ENCODE measurements at regions of chr9 and their contacts with region 1.

Region 1: DNA sequence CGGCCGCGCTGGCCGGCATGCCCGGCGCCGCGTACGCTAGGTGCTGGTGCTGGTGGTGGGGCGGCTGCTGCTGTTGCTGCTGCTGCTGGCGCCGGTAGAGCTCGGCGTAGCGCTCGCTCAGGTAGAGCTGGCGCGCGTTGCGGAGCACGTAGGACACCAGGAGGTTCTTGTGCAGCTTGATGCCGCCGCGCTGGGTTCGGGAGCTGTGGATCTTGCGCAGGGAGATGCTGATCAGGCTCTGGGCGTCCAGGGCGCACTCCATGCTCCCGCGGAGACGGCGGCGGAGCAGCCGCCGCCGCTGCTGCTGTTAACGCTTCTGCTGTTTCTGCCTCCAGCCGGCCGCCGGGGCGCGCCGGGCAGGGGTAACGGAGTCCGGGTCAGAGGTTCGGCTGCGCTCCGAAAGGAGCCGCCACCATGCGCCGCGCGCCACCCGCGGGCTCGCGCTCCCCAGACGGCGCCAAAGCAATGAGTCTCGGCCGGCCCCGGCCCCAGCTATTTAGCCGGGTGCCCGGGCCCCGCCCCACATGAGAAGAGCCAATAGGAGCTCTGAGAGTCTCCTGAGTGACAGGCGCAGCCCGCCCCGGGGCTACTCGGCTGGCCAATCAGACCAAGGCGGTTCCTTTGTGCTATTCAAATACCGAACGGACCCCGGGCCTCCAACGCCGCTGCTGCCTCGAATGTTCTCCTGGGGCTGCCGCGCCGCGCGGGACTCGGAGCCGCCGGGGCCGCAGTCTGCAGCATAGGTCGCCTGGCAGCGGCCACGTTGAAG is at the start of gene IER5L:
- DNase-seq: peak; percentile 93
- H3K4me3 Mint-ChIP-seq: peak within 1 kb of the TSS; percentile 91
- H3K27ac Mint-ChIP-seq: peak within 1 kb of the TSS; percentile 61
- H3K4me1 Mint-ChIP-seq: peaks cover 16% of the 10 kb centered on the region
- H3K27me3 Mint-ChIP-seq: peaks cover 7% of the 10 kb centered on the region
- total RNA-seq, gene IER5L: 14.4 TPM in 2 replicates

Region 2: DNA sequence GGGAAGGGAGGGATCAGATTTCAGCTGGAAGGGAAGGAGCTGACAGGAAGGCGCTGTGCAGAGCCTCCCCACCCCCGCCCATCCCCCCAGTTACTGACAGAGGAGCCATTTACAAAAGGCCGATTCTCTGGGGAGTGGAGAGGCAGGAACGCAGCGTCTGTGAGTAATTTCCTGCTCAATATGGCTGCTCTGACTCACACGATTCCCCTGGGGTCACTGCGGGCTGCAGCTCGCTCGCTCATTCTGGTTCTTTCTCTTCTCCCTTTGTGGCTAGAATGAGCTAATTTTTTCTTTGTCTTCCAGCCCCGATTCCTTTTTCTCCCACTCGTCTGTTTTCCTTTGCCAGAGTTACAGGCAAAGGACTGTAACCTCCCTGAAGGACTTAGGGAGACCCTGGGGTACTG is 38.0 kb before region 1 on chr9:
- intact Hi-C with region 1: loop called (anchors 1 kb)
- DNase-seq: peak; percentile 78
- H3K4me3 Mint-ChIP-seq: peak overlapping the region; percentile 82
- H3K27ac Mint-ChIP-seq: peak overlapping the region; percentile 92
- H3K4me1 Mint-ChIP-seq: peaks cover 32% of the 10 kb centered on the region
- H3K27me3 Mint-ChIP-seq: no peaks in the 10 kb centered on the region

Region 3: DNA sequence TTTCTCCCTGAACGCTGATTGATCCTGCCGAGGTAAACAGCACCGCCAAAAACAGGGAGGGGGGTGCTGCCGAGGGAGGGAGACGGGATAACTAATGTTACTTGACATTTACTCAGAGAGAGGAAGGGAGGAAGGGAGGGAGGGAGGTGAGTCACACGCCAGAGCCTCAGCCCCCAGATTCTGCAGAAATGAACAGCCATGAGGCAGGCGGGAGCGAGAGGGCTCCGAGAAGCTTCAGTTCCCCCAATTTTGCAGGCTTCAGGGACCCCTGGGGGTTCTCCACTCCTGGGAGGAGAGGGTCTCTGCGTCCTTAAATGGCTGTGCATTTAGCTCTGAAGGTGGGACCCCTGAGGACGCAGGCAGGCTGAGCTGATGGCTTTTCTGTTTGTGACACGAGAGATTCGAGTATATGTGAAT is 59.2 kb after region 1 on chr9:
- intact Hi-C with region 1: loop called (anchors 1 kb)
- DNase-seq: no peak
- H3K4me3 Mint-ChIP-seq: peak overlapping the region; percentile 69
- H3K27ac Mint-ChIP-seq: peak overlapping the region; percentile 92
- H3K4me1 Mint-ChIP-seq: peaks cover 39% of the 10 kb centered on the region
- H3K27me3 Mint-ChIP-seq: no peaks in the 10 kb centered on the region

Region 4: GRCh38 chr9:129320575-129321263 is 142.7 kb after region 1 on chr9:
- intact Hi-C with region 1: loop called (anchors 2 kb)
- DNase-seq: peak; percentile 42
- H3K4me3 Mint-ChIP-seq: peak overlapping the region; percentile 77
- H3K27ac Mint-ChIP-seq: peak overlapping the region; percentile 81
- H3K4me1 Mint-ChIP-seq: peaks cover 19% of the 10 kb centered on the region
- H3K27me3 Mint-ChIP-seq: peaks cover 6% of the 10 kb centered on the region

Region 5: DNA sequence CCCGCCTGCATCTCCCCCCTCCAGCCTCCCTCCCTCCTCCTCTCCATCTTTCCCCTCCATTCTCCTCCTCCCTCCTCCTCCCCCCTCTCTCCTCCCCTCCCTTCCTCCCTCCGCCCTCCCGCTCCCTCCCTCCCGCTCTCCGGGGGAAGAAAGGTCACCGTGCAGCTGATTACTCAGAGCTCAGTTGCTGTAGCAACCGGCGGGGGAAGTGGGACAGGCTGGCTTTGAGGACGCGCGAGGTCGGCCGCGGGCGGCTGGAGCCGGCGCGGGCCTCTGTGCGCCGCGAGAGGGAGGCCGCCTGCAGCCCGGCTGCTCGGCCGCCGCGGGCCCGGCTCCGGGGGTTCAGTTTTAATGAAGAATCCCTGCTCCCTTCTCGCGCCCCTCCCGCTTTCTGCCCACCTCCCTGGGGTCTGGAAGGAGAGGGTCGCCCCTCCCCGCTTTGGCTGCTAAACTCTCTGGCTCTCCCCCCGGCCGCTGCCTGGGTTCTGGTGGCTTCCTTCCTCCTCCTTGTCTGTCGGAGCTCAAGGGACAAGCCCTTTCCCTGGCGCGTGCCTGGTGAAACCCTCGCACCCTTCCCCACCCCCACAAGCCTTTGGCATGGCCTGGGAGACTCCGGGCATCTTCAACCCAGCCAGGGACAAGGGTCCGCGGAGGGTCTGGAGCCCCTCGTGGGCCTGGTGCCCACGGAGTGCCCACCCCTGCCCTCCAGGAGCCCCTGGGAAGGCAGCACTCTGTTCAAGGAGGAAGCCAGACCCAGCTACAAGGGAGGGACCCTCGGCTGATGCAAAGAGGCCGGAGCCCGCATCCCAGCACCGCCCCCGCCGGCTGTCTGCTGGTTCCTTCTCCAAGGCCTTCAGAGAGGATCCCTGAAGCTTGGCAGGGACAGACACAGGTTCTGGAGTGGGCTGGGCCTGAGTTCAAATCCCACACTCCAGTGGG is 282.6 kb after region 1 on chr9:
- intact Hi-C with region 1: loop called (anchors 2 kb)
- DNase-seq: peak; percentile 83
- H3K4me3 Mint-ChIP-seq: peak overlapping the region; percentile 74
- H3K27ac Mint-ChIP-seq: peak overlapping the region; percentile 91
- H3K4me1 Mint-ChIP-seq: peaks cover 39% of the 10 kb centered on the region
- H3K27me3 Mint-ChIP-seq: peaks cover 1% of the 10 kb centered on the region

Region 6: GRCh38 chr9:129495534-129496325 is 317.8 kb after region 1 on chr9:
- intact Hi-C with region 1: loop called (anchors 1 kb)
- DNase-seq: peak; percentile 82
- H3K4me3 Mint-ChIP-seq: peak overlapping the region; percentile 81
- H3K27ac Mint-ChIP-seq: peak overlapping the region; percentile 77
- H3K4me1 Mint-ChIP-seq: peaks cover 32% of the 10 kb centered on the region
- H3K27me3 Mint-ChIP-seq: no peaks in the 10 kb centered on the region

Region 7: GRCh38 chr9:129626079-129626624 is 448.2 kb after region 1 on chr9 and contains the start of gene NTMT1:
- intact Hi-C with region 1: loop called (anchors 1 kb)
- DNase-seq: peak; percentile 85
- H3K4me3 Mint-ChIP-seq: peak within 1 kb of the TSS; percentile 86
- H3K27ac Mint-ChIP-seq: peak within 1 kb of the TSS; percentile 95
- H3K4me1 Mint-ChIP-seq: peaks cover 41% of the 10 kb centered on the region
- H3K27me3 Mint-ChIP-seq: peaks cover 7% of the 10 kb centered on the region
- total RNA-seq, gene NTMT1: 67.1 and 67.3 TPM in 2 replicates